ENCODE measurements at regions of chr6 and their contacts with region 1.

Region 1: GRCh38 chr6:33410050-33410710 is 634 bp upstream of the PHF1 start:
- DNase-seq: peak; percentile 98
- ATAC-seq: peak; percentile 88
- H3K4me3 Mint-ChIP-seq: peak overlapping the region; percentile 80
- H3K27ac Mint-ChIP-seq: peak overlapping the region; percentile 96
- H3K4me1 Mint-ChIP-seq: peaks cover 31% of the 10 kb centered on the region
- H3K27me3 Mint-ChIP-seq: no peaks in the 10 kb centered on the region

Region 2: DNA sequence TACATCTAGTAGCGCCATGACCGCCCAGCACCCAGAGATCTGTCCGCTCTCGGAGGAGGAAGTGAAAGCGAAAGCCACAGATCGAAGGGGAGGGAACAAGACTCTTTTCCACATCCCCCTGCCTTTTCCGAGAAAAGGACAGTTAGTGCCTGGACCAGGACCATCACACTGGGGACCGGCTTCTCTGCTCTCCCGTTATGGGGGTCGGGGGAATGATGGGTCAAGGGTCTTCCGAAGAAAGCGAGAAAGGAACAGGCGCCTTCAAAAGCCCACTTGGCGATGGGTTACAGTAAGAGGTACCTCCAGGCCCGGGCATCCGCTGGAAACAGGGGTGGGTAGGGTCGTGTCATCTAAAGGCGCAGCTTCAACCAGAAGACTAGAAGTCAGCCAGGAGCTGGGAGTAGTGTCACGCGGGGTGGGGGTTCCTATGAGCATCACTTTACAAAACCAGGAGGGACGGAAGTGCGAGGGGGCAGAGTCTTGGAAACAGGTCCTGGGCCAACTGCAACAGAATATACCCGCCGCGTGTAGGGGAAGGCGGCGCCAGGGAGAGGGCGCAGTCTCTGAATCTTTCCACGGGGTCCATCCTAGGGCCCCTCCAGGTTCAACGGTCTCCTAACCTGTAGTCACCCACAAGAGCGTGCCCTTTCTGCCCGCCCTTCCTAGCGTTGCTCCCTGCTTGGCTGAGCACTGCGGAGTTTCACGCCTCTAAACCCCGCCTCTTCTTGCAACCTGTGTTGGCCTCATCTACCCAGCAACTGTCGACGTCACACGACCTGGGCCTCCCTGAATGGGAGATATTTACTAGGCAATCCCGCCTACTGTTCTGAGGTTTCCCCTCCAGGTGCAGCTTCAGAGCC is 566.0 kb before region 1 on chr6 and contains the start of gene PSMB8:
- CTCF ChIA-PET with region 1: no interaction called
- POLR2A ChIA-PET with region 1: no interaction called
- intact Hi-C with region 1: loop called in 1 of 2 experiments (anchors 5 kb)
- DNase-seq: peak; percentile 99
- ATAC-seq: peak; percentile 73
- H3K4me3 Mint-ChIP-seq: peak within 1 kb of the TSS; percentile 95
- H3K27ac Mint-ChIP-seq: peak within 1 kb of the TSS; percentile 97
- H3K4me1 Mint-ChIP-seq: peaks cover 66% of the 10 kb centered on the region
- H3K27me3 Mint-ChIP-seq: no peaks in the 10 kb centered on the region
- total RNA-seq, gene PSMB8: 238 to 338 TPM

Region 3: DNA sequence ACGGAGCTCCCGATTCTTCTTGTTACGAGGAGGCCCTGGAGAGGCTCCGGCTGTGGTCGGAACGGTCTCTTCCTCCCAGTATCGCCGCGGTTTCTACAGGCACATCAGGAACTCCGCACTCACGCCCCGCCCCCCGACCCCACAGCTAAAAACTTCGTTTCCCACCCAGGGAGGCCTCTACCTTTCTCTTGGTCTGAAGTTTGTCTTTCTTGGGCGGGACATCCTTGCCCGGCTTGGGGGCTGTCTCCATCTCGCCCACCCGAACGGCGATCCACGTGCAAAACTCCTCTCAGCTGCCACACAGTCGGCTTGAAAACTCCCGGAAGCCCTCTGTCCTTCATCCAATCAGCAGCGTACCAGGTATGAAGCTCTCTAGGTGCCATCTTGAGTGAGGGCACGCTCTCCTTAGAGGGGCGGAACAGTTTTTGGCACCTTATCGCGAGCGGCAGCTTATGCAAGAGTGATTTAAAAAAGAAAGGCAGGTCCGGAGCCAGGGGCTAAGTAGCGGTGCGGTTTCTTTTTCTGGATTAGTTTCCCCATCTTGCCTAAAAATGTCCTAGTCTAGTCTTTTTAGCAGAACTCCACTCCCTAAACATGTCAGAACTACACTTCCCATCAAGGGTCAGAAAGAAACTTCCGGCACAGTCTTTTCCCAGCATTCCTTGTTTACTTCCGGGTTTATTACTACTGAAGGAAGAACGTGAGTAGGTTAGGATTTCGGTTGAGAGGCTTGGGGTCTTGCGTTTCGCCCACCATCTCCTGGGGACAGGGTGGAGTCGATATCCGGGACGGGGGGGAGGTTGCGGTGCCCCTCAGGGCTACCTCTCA is 121.0 kb before region 1 on chr6 and contains the starts of genes PFDN6 and WDR46:
- CTCF ChIA-PET with region 1: no interaction called
- POLR2A ChIA-PET with region 1: interaction called, 3 read pairs
- intact Hi-C with region 1: loop called in 1 of 2 experiments (anchors 2 kb)
- DNase-seq: peak; percentile 87
- ATAC-seq: peak; percentile 98
- H3K4me3 Mint-ChIP-seq: peak within 1 kb of the TSS; percentile 98
- H3K27ac Mint-ChIP-seq: peak within 1 kb of the TSS; percentile 97
- H3K4me1 Mint-ChIP-seq: peaks cover 37% of the 10 kb centered on the region
- H3K27me3 Mint-ChIP-seq: no peaks in the 10 kb centered on the region
- total RNA-seq, gene PFDN6: 65.4 to 96.9 TPM
- total RNA-seq, gene WDR46: 63.5 to 69.4 TPM

Region 4: GRCh38 chr6:33323623-33323948 is 86.6 kb before region 1 on chr6:
- CTCF ChIA-PET with region 1: no interaction called
- POLR2A ChIA-PET with region 1: interaction called, 4 read pairs
- intact Hi-C with region 1: loop called in 1 of 2 experiments (anchors 1 kb)
- DNase-seq: no peak
- ATAC-seq: no peak
- H3K4me3 Mint-ChIP-seq: peak overlapping the region; percentile 99
- H3K27ac Mint-ChIP-seq: peak overlapping the region; percentile 99
- H3K4me1 Mint-ChIP-seq: peaks cover 46% of the 10 kb centered on the region
- H3K27me3 Mint-ChIP-seq: no peaks in the 10 kb centered on the region

Region 5: DNA sequence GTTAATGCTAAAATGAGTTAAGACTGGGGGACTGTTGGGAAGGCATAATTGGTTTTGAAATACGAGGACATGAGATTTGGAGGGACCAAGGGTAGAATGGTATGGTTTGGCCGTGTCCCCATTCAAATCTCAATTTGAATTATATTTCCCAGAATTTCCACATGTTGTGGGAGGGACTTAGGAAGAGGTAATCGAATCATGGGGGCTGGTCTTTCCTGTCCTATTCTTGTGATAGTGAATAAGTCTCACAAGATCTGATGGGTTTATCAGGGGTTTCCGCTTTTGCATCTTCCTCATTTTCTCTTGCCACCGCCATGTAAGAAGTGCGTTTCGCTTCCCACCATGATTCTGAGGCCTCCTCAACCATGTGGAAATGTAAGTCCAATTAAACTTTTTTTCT is 56.9 kb after region 1 on chr6:
- CTCF ChIA-PET with region 1: no interaction called
- POLR2A ChIA-PET with region 1: no interaction called
- intact Hi-C with region 1: no loop called
- DNase-seq: no peak
- ATAC-seq: no peak
- H3K4me3 Mint-ChIP-seq: no peak overlapping the region
- H3K27ac Mint-ChIP-seq: no peak overlapping the region
- H3K4me1 Mint-ChIP-seq: no peaks in the 10 kb centered on the region
- H3K27me3 Mint-ChIP-seq: no peaks in the 10 kb centered on the region

Region 6: GRCh38 chr6:33788694-33789549 is 378.7 kb after region 1 on chr6 and contains the start of gene LEMD2:
- CTCF ChIA-PET with region 1: no interaction called
- POLR2A ChIA-PET with region 1: no interaction called
- intact Hi-C with region 1: loop called in 1 of 2 experiments (anchors 2 kb)
- DNase-seq: peak; percentile 93
- ATAC-seq: peak; percentile 87
- H3K4me3 Mint-ChIP-seq: peak within 1 kb of the TSS; percentile 96
- H3K27ac Mint-ChIP-seq: peak within 1 kb of the TSS; percentile 99
- H3K4me1 Mint-ChIP-seq: peaks cover 47% of the 10 kb centered on the region
- H3K27me3 Mint-ChIP-seq: no peaks in the 10 kb centered on the region
- total RNA-seq, gene LEMD2: 55.2 to 61.5 TPM

Measured in activated CD4-positive, alpha-beta T cell treated with anti-CD3 and anti-CD28 coated beads for 36 hours (primary cell).